Activated CD4-positive, alpha-beta memory T cell treated with anti-CD3 and anti-CD28 coated beads for 36 hours (primary cell): ENCODE measurements at regions of chr10 and their contacts with region 1.

Region 1: DNA sequence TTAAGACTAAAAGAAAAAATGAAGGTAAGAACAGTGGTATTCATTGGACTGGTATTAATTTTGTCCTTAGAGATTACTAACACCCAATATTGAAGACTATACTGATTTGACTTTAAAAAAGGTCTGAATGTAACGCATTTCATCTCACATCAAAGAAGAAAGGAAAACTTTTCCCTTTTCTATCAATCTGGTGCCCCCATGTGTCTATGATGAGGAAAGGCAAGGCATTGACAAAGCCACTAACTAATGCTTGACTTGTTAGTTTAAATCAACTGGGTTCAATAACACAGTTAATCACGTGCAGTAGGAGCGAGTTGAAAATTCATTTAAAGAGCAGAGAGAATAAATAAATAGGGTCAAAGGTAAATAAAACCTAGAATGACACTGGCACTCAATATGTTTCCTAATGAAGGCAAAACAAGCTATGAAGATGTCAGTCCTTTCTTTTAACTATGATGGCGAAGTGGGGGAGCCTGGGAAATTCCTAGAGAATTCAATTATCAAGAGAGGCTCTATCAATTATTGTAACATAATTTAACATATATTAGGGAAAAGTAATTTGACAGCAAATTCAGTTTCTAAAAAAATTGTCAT is 180.9 kb downstream of the ANK3 start:
- DNase-seq: no peak
- H3K4me3 Mint-ChIP-seq: no peak overlapping the region
- H3K27ac Mint-ChIP-seq: no peak overlapping the region
- H3K4me1 Mint-ChIP-seq: peaks cover 20% of the 10 kb centered on the region
- H3K27me3 Mint-ChIP-seq: no peaks in the 10 kb centered on the region

Region 2: GRCh38 chr10:60099998-60100747 is 108.6 kb before region 1 on chr10:
- CTCF ChIA-PET with region 1: interaction called, 5 read pairs
- POLR2A ChIA-PET with region 1: no interaction called
- intact Hi-C with region 1: loop called (anchors 1 kb)
- DNase-seq: no peak
- H3K4me3 Mint-ChIP-seq: no peak overlapping the region
- H3K27ac Mint-ChIP-seq: no peak overlapping the region
- H3K4me1 Mint-ChIP-seq: no peaks in the 10 kb centered on the region
- H3K27me3 Mint-ChIP-seq: no peaks in the 10 kb centered on the region

Region 3: GRCh38 chr10:60114765-60115586 is 93.8 kb before region 1 on chr10:
- CTCF ChIA-PET with region 1: interaction called, 9 read pairs
- POLR2A ChIA-PET with region 1: no interaction called
- intact Hi-C with region 1: loop called (anchors 1 kb)
- DNase-seq: no peak
- H3K4me3 Mint-ChIP-seq: no peak overlapping the region
- H3K27ac Mint-ChIP-seq: no peak overlapping the region
- H3K4me1 Mint-ChIP-seq: no peaks in the 10 kb centered on the region
- H3K27me3 Mint-ChIP-seq: no peaks in the 10 kb centered on the region